HEK293 (cell line): ENCODE measurements at regions of chr15 and their contacts with region 1.

Region 1: GRCh38 chr15:77543159-77543882 is 89.4 kb downstream of the LINGO1 start:
- H3K4me3 ChIP-seq: peak overlapping the region; percentile 44
- H3K27ac ChIP-seq: peak overlapping the region; percentile 54; the same call in 1 of the 2 replicates
- H3K4me1 ChIP-seq: no peaks in the 10 kb centered on the region
- CTCF ChIP-seq: peak; percentile 99

Region 2: DNA sequence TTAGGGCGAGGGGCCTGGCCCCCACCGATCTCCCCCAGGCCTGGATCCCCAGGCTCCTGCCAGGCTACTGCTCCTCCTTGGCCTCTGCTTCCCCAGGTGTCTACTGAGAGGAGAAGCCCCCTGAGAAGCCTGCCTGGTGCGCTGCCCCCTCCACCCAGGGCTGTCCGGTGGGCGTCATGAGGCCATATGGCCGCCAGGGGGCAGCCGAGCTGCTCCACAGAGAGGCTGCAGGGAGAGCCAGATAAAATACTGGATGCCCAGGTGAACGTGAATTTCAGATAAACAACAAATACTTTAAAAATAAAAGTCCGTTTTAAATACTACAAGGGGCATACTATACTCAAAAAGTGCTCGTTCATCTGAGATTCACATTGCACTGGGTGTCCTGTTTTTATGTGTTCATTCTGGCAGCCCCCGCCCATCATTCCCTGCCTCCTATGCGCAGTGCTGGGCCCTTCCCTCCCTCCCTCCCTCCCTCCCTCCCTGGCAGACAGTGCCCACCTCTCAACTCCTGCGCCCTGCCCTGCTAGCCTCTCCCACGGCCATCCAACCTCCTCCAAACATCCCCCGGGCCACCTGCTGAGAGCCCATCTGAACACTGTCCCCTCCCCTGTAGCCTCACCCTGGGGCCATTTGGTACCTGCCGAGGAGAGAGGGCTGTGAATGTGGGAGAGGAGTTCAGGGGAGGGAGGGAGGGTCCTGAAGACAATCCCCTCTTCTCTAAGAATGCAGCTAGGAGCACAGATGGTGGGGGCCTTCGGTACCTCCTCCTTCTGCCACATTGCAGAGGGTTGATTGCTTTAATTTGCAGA is 518.8 kb before region 1 on chr15:
- CTCF ChIA-PET with region 1: interaction called, 12 read pairs
- POLR2A ChIA-PET with region 1: no interaction called
- H3K4me3 ChIP-seq: no peak overlapping the region
- H3K27ac ChIP-seq: no peak overlapping the region
- H3K4me1 ChIP-seq: no peaks in the 10 kb centered on the region
- CTCF ChIP-seq: peak; percentile 63

Region 3: DNA sequence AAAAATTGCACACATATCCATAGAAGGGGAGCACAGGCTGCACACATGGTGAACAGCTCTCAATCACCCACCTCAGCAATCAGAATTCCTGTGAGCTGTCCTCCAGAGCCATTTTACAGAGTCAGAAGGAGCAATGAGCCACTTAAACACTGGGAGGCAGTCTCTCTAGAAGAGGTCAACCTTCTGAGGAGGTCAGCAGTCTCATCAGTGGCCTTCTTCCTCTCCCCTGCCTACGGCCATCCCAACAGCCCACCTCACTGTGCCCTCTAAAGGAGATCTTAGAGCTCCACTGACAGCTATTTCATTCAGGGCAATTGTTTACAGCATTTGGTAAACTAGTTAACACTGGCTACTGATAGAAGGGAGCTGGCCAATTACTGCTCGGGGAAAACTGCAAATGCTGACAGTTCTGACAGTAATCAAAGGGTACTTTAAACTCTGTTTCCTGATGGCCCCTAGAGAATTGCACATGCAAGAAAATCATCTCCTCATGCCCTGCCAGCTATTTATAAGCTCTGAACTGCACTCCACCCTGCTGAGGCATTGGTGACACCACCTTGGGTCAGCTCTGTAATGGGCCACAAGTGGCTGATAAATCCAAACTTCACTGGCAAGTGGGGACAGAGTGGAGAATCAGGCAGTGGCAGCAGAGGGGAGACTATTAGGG is 430.4 kb before region 1 on chr15:
- CTCF ChIA-PET with region 1: interaction called, 131 read pairs
- POLR2A ChIA-PET with region 1: interaction called, 4 read pairs
- H3K4me3 ChIP-seq: no peak overlapping the region
- H3K27ac ChIP-seq: no peak overlapping the region
- H3K4me1 ChIP-seq: no peaks in the 10 kb centered on the region
- CTCF ChIP-seq: no peak

Region 4: DNA sequence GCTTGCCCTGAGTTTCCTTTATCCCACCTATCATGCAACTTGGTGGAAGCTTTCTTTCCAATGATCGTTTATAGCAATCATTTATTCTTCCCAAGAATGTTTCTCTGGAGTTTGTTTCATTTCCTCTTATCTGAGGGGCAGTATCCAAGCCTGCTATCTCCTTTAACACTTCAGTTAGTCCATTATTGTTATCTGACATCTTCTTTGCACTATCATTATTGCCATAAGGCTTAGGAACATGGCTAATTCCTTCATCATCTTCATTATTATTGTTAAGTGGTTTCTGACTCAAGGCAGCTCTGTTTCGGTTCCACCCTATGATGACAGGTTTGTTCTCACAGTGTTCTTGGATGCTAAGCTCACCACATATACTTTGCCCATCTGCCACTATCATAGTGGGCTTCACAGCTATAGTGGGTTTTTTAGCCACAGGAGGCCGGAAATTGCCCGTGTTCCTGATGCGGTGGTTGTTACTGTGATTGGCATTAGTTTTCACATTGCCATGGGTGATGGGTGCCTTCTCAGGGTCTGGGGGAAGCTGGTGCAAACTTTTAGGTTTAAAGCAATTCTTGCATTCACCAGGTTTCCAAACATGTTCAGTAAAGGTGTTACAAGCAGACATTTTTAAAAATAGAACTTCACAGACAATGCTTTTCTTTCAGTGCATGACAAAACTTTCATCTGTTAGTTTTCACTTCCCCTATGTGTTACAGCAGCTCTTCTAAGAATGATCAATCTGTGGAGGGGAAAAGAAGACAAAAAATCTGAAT is 361.8 kb before region 1 on chr15:
- CTCF ChIA-PET with region 1: interaction called, 43 read pairs
- POLR2A ChIA-PET with region 1: interaction called, 4 read pairs
- H3K4me3 ChIP-seq: no peak overlapping the region
- H3K27ac ChIP-seq: no peak overlapping the region
- H3K4me1 ChIP-seq: no peaks in the 10 kb centered on the region
- CTCF ChIP-seq: no peak

Region 5: DNA sequence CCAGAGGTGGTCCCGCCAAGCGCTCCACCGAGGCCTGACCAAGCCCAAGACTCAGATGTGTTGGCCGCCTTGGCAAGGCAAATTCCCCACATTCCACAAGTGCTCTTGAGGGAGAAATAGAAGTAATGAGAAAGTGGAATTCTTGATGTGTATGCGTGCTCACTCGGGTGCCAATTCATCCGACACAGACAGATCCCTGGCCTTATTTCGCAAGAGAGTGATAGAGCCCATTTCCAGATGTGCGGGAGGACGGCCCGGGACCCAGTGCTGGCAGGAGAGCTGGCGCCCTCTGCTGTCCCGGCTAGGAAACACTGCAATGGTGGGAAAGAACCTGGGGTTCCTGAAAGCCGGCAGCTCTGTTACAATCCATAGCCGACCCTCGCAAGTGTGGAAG is 46.6 kb before region 1 on chr15:
- CTCF ChIA-PET with region 1: interaction called, 50 read pairs
- POLR2A ChIA-PET with region 1: interaction called, 5 read pairs
- H3K4me3 ChIP-seq: no peak overlapping the region
- H3K27ac ChIP-seq: no peak overlapping the region
- H3K4me1 ChIP-seq: no peaks in the 10 kb centered on the region
- CTCF ChIP-seq: peak; percentile 87

Region 6: DNA sequence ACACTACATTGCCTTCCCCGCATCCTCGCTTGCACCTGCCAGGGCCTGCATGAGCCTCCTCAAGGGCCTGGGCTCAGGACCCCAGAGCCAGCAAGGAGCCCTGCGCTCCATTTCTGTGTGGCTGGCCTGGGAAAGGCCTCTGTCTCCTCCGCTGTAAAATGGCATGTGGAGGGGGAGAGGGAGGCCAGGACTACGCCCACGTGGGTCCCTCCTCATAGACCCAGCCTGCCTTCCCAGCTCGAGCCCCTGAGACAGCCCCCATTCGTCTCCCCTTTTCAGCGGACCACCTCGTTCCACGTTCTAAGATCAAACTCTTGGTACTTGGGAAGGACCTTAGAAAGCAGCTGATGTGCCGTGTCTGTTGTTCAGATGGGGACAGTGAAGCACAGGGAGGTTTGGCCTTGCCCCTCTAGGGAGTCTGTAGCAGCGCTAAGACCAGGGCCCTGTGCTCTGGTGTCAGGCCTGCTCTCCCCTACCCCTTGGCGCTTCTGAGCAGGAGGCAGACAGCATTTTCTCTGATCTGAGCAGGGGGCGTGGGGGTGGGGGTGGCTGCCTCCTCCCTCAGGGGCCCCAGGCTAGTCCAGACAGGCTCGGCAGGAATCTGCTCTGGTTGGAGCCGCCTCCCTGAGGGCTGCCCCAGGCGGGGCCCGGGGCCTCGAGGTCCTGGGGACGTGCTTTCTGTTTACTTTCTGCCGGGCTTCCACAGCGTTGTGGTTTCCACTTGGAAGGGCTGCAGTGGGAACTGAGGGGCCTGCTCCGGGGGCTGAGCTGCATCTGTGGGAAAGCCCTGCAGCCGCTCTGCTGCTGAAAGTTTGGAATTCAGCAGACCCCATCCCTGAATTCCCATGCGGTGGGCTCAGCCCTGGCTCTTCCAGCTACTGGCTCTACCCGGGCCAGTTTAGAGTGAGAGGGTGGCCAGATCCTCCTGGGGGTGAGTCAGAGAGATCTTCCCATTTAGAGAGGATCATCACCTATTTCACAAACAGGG is 16.2 kb before region 1 on chr15:
- CTCF ChIA-PET with region 1: interaction called, 36 read pairs
- POLR2A ChIA-PET with region 1: interaction called, 4 read pairs
- H3K4me3 ChIP-seq: no peak overlapping the region
- H3K27ac ChIP-seq: peak overlapping the region; percentile 35
- H3K4me1 ChIP-seq: peaks cover 10% of the 10 kb centered on the region
- CTCF ChIP-seq: no peak

Region 7: GRCh38 chr15:77617476-77618230 is 74.3 kb after region 1 on chr15:
- CTCF ChIA-PET with region 1: interaction called, 16 read pairs
- POLR2A ChIA-PET with region 1: no interaction called
- H3K4me3 ChIP-seq: no peak overlapping the region
- H3K27ac ChIP-seq: no peak overlapping the region
- H3K4me1 ChIP-seq: no peaks in the 10 kb centered on the region
- CTCF ChIP-seq: 0 out of 2 replicates have a peak, but pooled peaks have one; percentile 43

Region 8: GRCh38 chr15:78162038-78162437 is 618.7 kb after region 1 on chr15:
- CTCF ChIA-PET with region 1: no interaction called
- POLR2A ChIA-PET with region 1: no interaction called
- H3K4me3 ChIP-seq: no peak overlapping the region
- H3K27ac ChIP-seq: no peak overlapping the region
- H3K4me1 ChIP-seq: peaks cover 4% of the 10 kb centered on the region
- CTCF ChIP-seq: no peak